Cardiac septum (tissue), 1 donor: ENCODE measurements at regions of chr1 and their contacts with region 1.

Region 1: GRCh38 chr1:112809253-112809684 is 94.1 kb upstream of the PPM1J start:
- DNase-seq: peak; percentile 82

Region 2: GRCh38 chr1:112882271-112882744 is 73.0 kb after region 1 on chr1:
- intact Hi-C with region 1: loop called (anchors 5 kb)
- DNase-seq: no peak

Region 3: GRCh38 chr1:113042285-113043143 is 233.2 kb after region 1 on chr1:
- intact Hi-C with region 1: loop called (anchors 1 kb)
- DNase-seq: peak; percentile 82